ENCODE measurements at regions of chr11 and their contacts with region 1.

Region 1: DNA sequence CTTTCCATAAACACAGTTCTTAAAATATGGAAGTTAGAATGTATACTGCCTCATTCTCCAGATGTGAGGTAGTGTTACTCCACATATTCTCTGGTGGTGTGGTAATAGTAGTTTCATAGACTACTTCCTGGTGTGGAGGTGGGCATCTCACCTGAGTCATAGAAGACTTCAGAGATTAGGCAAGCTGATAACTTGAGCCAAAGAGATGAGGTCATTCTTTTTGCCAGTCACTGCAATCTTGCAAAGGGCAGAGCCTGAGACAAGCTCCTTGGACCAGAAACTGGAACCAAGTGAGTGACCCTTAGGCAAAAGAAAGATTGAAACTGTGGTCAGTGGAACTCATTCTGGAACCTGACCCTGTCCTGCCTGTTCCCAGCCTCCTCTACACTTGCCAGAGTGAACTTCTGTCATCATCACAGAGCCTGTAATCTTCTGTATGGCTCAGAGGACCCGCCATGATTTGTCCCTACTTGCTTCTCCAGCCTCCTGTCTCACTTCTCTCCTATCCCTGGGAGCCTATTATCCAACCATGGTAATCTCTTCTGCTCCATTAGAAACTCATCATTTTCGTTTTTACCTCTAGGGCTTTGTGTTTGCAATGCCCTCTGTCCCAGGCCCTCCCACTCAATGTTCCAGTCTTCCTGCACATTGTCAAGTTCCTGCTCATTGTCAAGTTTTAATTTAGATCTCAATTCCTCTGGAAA is 10.6 kb upstream of the CCDC83 start:
- DNase-seq: peak; percentile 95
- ATAC-seq: peak; percentile 83
- H3K4me3 ChIP-seq: no peak overlapping the region
- H3K27ac ChIP-seq: peak overlapping the region; percentile 84
- H3K4me1 ChIP-seq: peaks cover 36% of the 10 kb centered on the region
- H3K27me3 ChIP-seq: no peaks in the 10 kb centered on the region
- CTCF ChIP-seq: no peak

Region 2: DNA sequence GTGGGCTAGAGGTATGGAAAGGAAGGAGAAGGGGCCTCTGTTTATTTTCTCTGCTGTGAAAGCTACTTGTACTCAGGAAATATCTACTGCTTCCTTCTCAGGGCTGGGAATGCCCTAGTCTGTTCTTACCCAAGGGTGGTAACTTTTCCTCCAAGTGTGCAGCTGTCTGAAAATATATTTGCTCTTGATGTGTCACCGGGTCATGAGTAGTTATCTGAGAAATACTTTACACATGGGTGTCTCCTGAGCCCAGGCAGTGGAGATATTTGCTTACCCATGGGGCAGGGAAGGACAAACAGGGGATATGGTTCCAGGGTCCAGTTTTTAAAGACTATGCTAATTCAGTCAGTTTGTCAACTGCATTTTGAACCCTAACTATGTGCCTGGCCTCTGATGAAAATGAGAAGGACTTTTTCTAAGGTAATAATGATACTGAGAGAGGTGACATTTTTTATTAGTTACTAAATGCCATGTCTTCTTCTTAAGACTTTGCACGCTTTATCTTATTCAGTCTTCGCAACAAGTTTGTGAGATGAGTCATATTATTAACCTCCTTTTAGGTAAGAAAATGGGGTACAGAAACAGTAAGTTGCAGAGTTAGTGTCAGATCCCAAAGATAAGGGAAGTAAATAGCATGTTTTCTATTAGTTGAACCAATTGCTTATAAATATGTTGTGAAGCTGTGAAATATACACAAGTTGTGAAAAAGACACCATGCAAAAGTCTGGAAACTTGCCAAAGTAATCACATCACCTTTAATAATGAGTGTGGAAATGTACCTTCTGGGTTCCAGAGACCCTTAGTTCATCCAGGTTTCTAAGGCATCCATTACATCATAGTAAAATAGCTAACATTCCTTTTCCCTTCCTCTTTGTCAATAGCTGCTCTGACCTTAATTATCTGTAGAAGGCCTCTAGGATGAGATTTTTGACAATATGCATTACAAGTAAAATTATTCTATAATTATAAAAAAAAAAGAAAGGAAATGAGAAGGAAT is 56.5 kb before region 1 on chr11:
- CTCF ChIA-PET with region 1: no interaction called
- POLR2A ChIA-PET with region 1: no interaction called
- intact Hi-C with region 1: no loop called
- DNase-seq: peak; percentile 93
- ATAC-seq: peak; percentile 98
- H3K4me3 ChIP-seq: peak overlapping the region; percentile 12; the same call in 1 of the 2 replicates
- H3K27ac ChIP-seq: peak overlapping the region; percentile 91
- H3K4me1 ChIP-seq: peaks cover 37% of the 10 kb centered on the region
- H3K27me3 ChIP-seq: no peaks in the 10 kb centered on the region
- CTCF ChIP-seq: no peak

Region 3: DNA sequence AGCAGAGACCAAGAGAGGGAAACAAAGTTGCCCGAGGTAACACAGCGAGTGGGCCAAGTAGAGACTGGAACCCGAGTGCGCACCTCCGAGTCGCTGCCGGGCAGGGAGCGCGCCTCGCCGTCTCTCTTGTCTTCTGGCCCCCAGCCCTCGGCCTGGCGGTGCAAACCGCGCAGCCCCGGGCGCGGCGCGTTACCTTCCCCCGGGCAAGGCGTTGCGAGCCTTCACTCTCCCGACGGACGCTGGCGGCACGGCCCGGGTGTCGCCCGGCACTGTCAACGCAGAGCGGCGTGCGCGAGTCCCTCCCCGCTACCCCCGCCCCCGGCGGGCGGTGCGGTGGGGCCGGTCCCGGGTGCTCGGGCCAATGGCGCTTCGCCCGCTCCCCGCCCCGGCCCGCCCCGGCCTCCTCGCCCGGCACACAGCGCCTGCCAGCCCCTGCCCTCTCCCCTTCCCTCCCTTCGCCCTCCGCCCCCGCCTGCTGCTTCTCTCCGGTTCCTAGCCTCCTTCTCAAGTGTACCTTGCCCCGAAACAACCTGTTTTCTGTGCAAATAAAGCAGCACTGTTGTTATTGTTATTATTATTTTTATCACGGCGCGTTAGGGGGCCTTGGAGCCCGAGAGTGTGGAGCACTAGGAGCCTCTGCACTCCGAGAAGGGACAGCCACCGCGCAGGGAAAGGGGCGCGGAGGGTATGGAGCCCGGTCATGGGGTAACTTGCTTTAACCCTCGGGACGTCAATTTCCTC is 33.5 kb before region 1 on chr11 and contains the start of gene SYTL2:
- CTCF ChIA-PET with region 1: interaction called, 3 read pairs
- POLR2A ChIA-PET with region 1: interaction called, 3 read pairs
- intact Hi-C with region 1: loop called (anchors 5 kb)
- DNase-seq: peak; percentile 85
- ATAC-seq: peak; percentile 67
- H3K4me3 ChIP-seq: peak within 1 kb of the TSS; percentile 77
- H3K27ac ChIP-seq: peak within 1 kb of the TSS; percentile 20
- H3K4me1 ChIP-seq: peaks cover 61% of the 10 kb centered on the region
- H3K27me3 ChIP-seq: no peaks in the 10 kb centered on the region
- CTCF ChIP-seq: no peak
- total RNA-seq, gene SYTL2: 51.7 and 57.1 TPM in 2 replicates